ENCODE measurements at regions of chr19 and their contacts with region 1.

Region 1: DNA sequence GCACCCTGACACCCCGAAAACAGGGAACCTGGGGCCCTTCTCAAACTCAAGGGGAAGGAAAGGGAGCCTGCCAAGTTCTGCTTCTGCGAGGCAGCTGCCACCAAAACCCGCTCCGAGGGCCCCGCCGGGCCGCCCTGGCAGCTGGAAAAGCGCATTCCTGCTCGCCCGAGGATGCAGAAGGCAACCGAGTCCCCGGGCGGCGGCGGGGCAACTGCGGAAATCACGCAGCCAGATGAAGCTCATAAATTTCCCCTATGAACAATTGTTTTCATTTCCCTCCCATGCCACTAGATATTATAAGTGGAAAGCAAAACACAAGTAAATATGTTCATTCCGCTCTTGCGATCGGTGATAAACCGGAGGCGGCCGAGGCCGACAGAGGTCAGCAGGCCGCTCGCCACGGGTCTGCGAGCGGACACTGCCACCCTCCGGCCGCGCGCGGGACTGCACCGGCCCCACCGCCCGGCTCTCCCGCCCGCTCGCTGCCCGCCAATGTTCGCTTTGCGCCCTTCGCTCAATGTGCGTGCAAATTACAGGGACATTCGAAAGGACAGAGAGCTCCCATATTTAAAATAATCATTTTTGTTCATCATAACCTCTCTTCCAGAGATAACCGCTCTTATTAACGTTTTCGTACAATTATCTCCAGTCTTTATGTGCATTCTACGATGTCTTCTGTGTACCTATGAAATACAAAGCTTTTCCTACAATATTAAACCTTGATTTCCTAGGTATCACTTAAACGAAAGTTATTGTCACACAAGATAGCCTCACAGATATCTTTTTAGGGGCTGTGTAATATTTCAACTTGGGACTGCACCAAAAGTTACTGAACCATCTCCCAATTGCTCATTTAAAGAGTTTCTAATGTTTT is 120.8 kb upstream of the ZNF507 start:
- DNase-seq: peak; percentile 73 to 88 (median 86)
- ATAC-seq: peak; percentile 99
- H3K4me3 ChIP-seq: no peak overlapping the region
- H3K27ac ChIP-seq: no peak overlapping the region
- H3K4me1 ChIP-seq: peaks cover 0 to 10% of the 10 kb centered on the region in 2 experiments; a peak in 1 of 5 replicates
- H3K27me3 ChIP-seq: peaks cover 3 to 30% of the 10 kb centered on the region in 2 experiments; a peak in 3 of 5 replicates
- CTCF ChIP-seq: peak; percentile 95 to 99 (median 97)
- EP300 ChIP-seq: no peak
- POLR2A ChIP-seq: no peak
- RAD21 ChIP-seq: peak; percentile 88 to 95

Region 2: DNA sequence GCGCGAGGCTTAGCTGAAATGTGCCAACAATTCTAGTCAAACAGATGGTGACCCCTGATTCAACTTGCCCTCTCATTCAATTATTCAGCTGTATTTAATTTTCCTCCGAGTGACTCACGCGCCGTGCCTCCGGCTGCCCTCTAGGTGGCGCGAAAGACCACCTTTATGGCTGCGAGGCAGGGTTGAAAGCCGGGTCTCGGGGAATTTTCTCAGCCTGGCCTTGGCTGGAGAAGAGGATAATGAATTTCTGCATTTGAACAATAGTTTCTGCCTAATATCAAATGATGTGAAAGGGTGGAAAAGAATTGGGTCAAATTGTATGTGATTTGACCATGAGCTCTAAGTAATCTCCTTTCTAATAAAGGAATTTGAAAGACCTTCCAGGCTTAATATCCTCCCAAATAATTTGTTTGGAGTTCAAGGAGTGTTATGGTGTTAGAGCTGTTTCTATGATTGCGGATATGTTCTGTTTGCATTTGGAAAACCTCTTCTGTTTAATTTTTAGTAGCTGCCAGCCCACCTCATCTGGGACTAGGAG is 1541.5 kb before region 1 on chr19:
- CTCF ChIA-PET with region 1: no interaction called
- POLR2A ChIA-PET with region 1: no interaction called
- in situ Hi-C with region 1: loop called (anchors 10 kb)
- intact Hi-C with region 1: loop called (anchors 2 kb)
- DNase-seq: peak; percentile 64 to 82 (median 81)
- ATAC-seq: peak; percentile 86
- H3K4me3 ChIP-seq: no peak overlapping the region
- H3K27ac ChIP-seq: no peak overlapping the region
- H3K4me1 ChIP-seq: peaks cover 0 to 3% of the 10 kb centered on the region in 2 experiments; a peak in 2 of 5 replicates
- H3K27me3 ChIP-seq: peaks cover 9 to 46% of the 10 kb centered on the region in 2 experiments; a peak in 4 of 5 replicates
- CTCF ChIP-seq: peak; percentile 79 to 94 (median 89)
- EP300 ChIP-seq: no peak
- POLR2A ChIP-seq: no peak
- RAD21 ChIP-seq: peak; percentile 69 to 80

Region 3: DNA sequence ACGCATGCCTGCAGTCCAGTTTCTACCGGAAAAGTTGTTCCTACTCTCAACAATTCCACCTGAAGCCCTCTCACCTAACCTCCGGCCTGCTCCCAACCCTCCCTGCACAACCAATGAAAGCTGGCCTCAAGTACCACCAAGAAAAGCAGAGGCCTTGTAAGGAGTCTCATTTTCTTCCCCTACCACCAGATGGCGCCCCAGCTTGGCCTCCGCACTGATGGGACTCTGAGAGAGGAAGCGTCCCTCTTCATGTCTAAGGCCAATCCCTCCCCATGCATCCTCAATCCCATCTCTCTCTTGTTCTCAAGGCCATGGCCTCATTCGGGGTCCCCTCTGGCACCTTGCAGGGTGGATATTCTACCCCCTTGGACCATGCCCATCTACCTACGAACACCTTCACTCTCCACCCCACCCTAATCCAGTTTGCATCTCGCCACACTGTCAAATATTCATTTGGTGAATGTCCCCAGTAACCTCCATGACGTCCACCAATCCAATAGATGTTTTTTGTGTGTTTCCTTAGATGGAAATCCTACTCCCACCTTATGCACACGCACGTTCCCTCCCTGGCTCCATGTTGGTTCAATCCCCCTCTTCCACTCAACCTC is 1439.7 kb before region 1 on chr19:
- CTCF ChIA-PET with region 1: interaction called, 11 read pairs
- POLR2A ChIA-PET with region 1: no interaction called
- in situ Hi-C with region 1: no loop called
- intact Hi-C with region 1: no loop called
- DNase-seq: peak; percentile 64 to 74 (median 68)
- ATAC-seq: peak; percentile 93
- H3K4me3 ChIP-seq: no peak overlapping the region
- H3K27ac ChIP-seq: no peak overlapping the region
- H3K4me1 ChIP-seq: no peaks in the 10 kb centered on the region
- H3K27me3 ChIP-seq: no peaks in the 10 kb centered on the region
- CTCF ChIP-seq: peak; percentile 68 to 81 (median 77)
- EP300 ChIP-seq: no peak
- POLR2A ChIP-seq: no peak
- RAD21 ChIP-seq: peak; percentile 62 to 69

Region 4: DNA sequence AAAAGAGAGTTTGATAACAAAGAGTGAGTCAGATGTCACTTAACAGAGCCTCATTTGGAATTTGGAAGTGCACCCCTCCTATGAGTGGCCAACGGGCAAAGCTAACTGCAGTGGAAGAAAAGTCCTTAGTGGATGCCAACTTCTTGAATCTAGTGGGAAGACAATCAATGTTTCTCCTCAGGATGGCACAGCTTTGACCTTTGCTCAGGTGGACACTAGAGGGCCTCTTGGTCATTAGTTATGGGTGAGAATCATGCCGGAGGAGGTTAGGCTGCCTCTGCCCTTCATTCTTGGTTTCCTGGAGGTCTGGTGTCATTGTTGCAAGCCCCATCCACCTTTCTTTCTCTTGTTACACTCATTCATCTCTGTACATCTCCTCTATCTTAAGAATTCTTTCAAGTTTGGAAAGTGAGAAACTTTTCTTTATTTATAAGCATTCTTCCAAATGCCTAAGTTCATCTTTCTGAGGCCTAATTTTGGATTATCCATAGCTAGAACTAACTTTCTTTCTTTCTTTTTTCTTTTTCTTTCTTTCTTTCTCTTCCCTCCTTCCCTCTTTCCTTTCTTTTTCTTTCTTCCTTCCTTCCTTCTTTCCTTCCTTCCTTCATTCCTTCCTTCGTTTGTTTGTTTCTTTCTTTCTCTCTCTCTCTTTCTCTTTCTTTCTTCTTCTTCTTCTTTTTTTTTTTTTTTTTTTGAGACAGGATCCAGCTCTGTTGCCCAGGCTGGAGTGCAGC is 548.2 kb before region 1 on chr19:
- CTCF ChIA-PET with region 1: interaction called, 3 read pairs
- POLR2A ChIA-PET with region 1: no interaction called
- in situ Hi-C with region 1: loop called (anchors 10 kb)
- intact Hi-C with region 1: loop called (anchors 10 kb)
- DNase-seq: peak in 3 of 4 experiments; percentile 13 to 33 (median 20)
- ATAC-seq: peak; percentile 67
- H3K4me3 ChIP-seq: no peak overlapping the region
- H3K27ac ChIP-seq: no peak overlapping the region
- H3K4me1 ChIP-seq: no peaks in the 10 kb centered on the region
- H3K27me3 ChIP-seq: no peaks in the 10 kb centered on the region; a peak in 1 of 5 replicates
- CTCF ChIP-seq: peak; percentile 30 to 54 (median 46); a peak in 3 of 6 replicates
- EP300 ChIP-seq: no peak
- POLR2A ChIP-seq: no peak
- RAD21 ChIP-seq: peak in 1 of 2 experiments; percentile 43; a peak in 1 of 4 replicates